ENCODE measurements at regions of chr21 and their contacts with region 1.

Region 1: GRCh38 chr21:45554477-45555175 is 12.4 kb upstream of the SLC19A1 start:
- DNase-seq: peak; percentile 97

Region 2: DNA sequence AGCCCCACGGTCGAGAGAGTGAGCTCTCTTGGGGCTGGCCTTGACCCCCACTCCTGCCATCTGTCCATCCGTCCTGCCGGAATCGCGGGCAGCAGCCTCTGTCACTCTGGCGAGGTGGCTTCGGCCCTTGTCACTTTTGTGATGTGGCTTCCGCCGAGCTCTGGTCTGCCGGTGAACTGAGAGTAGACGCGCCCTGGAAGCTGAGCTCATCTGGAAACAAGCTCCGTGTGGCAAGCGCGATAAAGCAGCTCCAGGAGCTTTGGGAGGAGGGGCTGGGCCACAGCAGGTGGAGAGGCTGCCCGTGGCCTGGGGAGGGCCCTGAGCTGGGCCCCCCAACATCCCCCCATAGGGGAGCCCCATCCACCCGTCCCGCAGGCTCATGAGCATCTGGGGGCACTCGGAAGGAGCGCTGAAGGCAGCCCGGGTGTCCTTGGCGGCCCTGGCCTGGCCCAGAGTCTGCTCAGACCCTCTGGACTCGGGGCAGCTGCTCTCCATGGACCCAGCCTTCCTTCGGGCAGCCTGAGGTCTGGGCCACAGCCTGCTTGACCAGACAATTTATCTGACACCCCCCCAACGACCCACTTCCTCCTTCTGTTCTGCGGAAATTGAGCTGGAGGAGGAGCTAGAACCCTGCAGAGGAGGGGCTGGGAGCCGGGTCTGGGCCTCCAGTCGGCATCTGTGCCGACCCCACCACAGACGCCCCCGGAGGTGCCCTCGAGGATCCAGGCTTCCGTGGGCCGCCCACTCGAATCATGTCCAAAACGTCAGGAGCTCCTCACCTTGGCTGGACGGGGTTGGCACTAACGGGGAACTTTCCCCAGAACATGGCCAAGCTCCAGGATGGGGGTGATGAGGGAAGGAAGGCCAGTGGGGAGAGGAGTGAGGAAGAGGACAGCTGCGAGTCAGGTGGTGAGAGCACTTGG is 71.5 kb before region 1 on chr21:
- intact Hi-C with region 1: no loop called
- DNase-seq: no peak

Region 3: DNA sequence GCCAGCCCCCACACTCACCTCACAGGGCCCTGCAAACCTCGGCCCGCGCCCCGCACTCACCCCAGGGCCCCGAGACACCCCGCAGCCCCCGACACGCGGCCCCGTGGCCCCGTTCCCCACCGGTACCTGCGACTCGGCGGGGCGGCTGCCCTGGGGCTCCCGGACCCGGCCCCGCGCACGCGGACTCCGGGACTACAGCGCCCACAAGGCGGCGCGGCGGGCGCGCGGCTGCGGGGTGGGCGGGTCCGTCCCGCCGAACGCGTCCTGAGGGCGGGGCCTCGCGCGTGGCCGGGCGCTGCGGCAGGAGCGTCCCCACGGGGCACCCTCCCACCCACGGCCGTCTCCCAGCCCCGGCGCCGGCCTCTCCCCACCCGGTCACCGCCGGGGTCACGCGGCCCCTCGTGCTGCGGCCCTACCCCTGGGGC is 12.4 kb before region 1 on chr21 and contains the start of gene SLC19A1:
- intact Hi-C with region 1: no loop called
- DNase-seq: peak; percentile 92
- total RNA-seq, gene SLC19A1: 4.5 to 6.5 TPM

Region 4: DNA sequence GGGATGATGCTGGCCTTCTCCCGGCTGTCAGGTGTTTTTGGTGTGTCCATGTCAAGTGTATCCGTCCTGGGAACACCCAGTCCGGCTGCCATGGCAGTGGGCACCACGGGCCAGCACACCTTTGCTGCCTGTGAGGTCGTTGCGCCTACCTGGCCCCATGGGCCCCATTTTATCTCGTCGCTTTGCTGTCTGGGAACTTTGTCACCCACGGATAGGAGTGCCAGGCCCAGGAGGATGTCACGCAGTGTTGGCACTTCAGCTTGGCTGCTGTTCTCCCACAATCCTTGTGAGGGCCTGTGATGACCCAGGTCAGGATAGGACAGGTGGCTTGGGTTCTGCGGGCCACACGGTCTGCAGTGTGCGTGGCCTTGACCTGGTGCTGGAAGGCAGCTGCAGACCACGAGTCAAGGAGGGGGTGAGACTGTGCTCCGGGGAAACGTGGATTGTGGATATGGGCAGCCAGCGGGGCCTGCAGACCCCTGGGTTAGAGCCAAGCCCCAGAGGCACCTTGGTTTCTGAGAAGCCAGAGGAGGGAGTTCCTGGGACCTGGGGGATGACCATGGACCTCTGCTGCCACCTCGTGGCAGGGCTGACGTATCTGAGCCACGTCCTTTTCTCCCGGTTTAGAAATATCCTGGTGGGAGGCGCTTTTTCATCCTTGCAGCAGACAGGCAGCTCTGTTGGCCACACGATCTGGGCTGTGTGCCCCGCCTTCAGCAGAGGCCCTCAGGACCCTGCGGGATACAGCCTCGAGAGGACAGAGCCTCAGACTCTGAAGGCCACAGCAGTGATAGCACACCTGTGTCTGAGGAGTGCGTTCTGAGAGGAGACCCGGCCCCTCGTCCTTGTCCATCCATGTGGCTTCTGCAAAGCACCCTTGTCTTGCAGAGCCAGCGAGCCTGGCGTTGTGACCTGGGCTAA is 265.8 kb after region 1 on chr21:
- intact Hi-C with region 1: loop called (anchors 5 kb)
- DNase-seq: peak; percentile 91

Region 5: DNA sequence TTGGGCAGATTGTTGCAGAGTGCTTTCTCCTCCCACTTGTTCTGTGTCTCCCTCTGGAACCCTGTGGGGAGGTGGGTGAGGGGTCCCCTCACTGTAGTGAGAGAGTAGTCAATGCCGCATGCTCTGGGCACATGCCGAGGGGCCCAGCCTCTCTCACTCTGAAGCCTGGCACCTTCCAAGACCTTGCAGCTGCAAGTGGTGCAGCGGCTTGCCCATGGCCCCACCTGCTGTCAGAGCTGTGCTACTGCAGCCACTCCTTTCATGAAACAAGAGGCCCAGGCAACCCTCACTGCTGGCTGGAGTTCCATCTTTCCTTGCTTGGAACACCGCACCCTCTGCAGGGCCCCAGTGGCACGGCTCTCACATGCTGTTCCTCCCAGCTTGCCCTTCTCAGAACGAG is 368.5 kb after region 1 on chr21:
- intact Hi-C with region 1: loop called in 1 of 2 experiments (anchors 5 kb)
- DNase-seq: peak; percentile 92

Measured in posterior vena cava (tissue), 2 donors.